B cell (primary cell): ENCODE measurements at regions of chr7 and their contacts with region 1.

Region 1: DNA sequence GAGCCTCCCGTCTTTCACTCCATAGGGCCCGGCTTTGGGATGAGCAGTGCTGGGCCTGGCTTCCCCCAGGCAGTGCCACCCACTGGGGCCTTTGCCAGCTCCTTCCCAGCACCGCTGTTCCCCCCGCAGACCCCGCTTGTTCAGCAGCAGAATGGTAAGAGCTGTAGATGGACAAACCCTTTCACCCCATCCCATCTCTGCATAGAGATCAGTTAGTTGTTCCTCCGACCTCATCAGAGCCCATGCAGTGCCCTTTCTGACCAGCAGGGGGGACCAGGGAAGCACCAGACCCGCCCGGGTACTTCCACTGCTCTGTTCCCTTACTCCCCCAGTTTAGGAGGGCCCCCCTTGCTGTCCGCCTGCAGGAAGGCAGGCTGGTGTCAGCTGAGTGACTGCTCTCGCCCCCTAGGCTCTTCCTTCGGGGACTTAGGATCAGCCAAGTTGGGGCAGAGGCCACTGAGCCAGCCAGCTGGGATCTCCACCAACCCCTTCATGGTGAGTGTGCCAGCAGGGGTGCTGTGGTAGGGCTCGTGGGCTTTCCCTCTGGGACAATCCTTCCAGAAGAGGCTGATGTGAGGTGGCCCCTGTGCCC is 9.8 kb downstream of the SAP25 start:
- DNase-seq: peak; percentile 85
- ATAC-seq: peak; percentile 77
- H3K4me3 ChIP-seq: no peak overlapping the region
- H3K4me3 Mint-ChIP-seq: no peak overlapping the region
- H3K27ac ChIP-seq: no peak overlapping the region
- H3K27ac Mint-ChIP-seq: no peak overlapping the region
- H3K4me1 ChIP-seq: peaks cover 20 to 29% of the 10 kb centered on the region in 2 donors
- H3K4me1 Mint-ChIP-seq: peaks cover 26% of the 10 kb centered on the region
- H3K27me3 ChIP-seq: no peaks in the 10 kb centered on the region
- H3K27me3 Mint-ChIP-seq: no peaks in the 10 kb centered on the region
- CTCF ChIP-seq: peak; percentile 94

Region 2: GRCh38 chr7:100478966-100479665 is 84.8 kb before region 1 on chr7 and contains the start of gene TSC22D4:
- CTCF ChIA-PET with region 1: interaction called, 18 read pairs
- POLR2A ChIA-PET with region 1: interaction called, 3 read pairs
- intact Hi-C with region 1: loop called (anchors 1 kb)
- DNase-seq: peak; percentile 92
- ATAC-seq: peak; percentile 70
- H3K4me3 ChIP-seq: peak within 1 kb of the TSS; percentile 90 to 99 (median 96)
- H3K4me3 Mint-ChIP-seq: peak within 1 kb of the TSS; percentile 97
- H3K27ac ChIP-seq: peak within 1 kb of the TSS; percentile 72 to 89
- H3K27ac Mint-ChIP-seq: peak within 1 kb of the TSS; percentile 91
- H3K4me1 ChIP-seq: peaks cover 34 to 51% of the 10 kb centered on the region in 2 donors
- H3K4me1 Mint-ChIP-seq: peaks cover 37% of the 10 kb centered on the region
- H3K27me3 ChIP-seq: no peaks in the 10 kb centered on the region
- H3K27me3 Mint-ChIP-seq: no peaks in the 10 kb centered on the region
- CTCF ChIP-seq: no peak
- total RNA-seq, gene TSC22D4: 92.8 and 95.0 TPM in 2 replicates

Region 3: DNA sequence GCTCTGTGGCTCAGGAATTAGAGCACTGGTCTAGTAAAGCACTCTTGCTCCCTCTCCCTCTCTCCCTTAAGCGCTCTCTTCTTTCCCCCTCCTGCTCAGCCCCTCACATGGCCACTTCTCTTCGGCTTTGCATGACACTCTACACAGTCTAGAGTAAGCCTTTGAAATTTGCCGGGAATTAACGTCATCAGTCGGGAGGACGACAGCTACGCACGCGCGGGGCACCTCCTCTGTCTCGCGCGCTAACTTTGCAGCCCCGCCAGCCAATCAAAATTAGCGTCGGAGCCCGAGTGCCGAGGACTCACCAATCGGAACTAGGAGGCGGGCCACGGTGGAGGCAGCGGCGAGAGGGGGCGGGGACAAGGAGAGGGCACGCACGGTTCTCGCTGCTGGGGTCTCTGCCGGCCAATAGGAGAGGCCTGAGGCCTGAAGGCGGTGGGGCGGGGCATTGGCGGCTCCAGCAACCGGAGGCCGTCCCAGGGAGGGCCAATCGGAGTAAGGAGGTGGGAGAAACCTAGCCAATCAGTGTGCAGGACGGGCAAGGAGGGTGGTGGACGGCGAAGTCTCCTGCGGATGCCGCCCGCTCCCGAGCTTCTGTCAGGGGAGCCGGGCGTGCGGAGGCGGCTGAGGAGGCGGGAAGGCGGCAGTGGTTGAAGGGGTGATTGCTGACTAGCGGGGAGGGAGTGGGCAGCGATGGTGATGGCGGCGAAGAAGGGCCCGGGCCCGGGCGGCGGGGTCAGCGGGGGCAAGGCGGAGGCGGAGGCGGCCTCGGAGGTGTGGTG is 25.1 kb before region 1 on chr7 and contains the start of gene AGFG2:
- CTCF ChIA-PET with region 1: interaction called, 21 read pairs
- POLR2A ChIA-PET with region 1: no interaction called
- intact Hi-C with region 1: loop called (anchors 2 kb)
- DNase-seq: peak; percentile 100
- ATAC-seq: peak; percentile 97
- H3K4me3 ChIP-seq: peak within 1 kb of the TSS; percentile 62 to 84 (median 72)
- H3K4me3 Mint-ChIP-seq: peak within 1 kb of the TSS; percentile 91
- H3K27ac ChIP-seq: peak within 1 kb of the TSS in 1 of 2 donors; percentile 42
- H3K27ac Mint-ChIP-seq: peak within 1 kb of the TSS; percentile 76
- H3K4me1 ChIP-seq: peaks cover 14 to 23% of the 10 kb centered on the region in 2 donors
- H3K4me1 Mint-ChIP-seq: peaks cover 36% of the 10 kb centered on the region
- H3K27me3 ChIP-seq: no peaks in the 10 kb centered on the region
- H3K27me3 Mint-ChIP-seq: no peaks in the 10 kb centered on the region
- CTCF ChIP-seq: no peak
- total RNA-seq, gene AGFG2: 11.0 and 11.6 TPM in 2 replicates

Region 4: DNA sequence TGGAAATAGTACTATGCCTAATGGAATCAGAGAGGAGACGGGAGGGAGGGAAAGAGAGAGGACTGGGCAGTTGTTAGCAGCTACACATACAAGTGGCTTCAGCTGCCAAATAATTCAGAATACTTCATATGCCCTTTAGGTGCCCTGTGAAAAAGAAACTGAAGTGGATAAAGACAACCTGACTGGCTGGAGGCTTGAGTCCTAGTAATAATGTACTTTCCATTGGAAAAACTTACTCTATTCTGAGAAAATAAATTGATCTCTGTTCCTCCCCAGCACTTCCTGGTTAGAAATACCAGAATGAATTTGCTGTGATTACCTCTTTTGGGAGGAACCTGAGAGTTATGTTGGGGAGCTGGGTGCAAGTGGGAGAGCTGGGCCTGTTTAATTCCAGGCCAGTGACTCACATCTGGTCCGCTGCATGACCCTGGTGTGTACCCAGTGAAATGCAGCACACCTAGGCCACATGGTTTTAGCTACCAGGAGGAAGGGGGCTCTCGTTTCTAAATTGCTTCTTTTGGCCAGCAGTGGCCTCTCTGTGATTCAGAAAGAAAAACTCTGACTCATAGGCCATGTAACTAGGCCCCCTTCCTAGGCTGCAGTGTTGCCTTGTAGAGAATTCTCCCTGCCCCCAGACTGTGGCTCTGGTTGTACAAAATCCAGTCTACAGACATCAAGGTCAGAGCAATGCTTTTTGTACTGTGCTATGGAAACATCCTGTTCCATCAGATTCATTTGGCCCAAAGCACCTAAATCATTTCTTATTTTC is 18.4 kb before region 1 on chr7:
- CTCF ChIA-PET with region 1: interaction called, 67 read pairs
- POLR2A ChIA-PET with region 1: no interaction called
- intact Hi-C with region 1: no loop called
- DNase-seq: no peak
- ATAC-seq: peak; percentile 31
- H3K4me3 ChIP-seq: no peak overlapping the region
- H3K4me3 Mint-ChIP-seq: peak overlapping the region; percentile 35
- H3K27ac ChIP-seq: peak overlapping the region in 1 of 2 donors; percentile 12
- H3K27ac Mint-ChIP-seq: peak overlapping the region; percentile 43
- H3K4me1 ChIP-seq: peaks cover 36 to 57% of the 10 kb centered on the region in 2 donors
- H3K4me1 Mint-ChIP-seq: peaks cover 72% of the 10 kb centered on the region
- H3K27me3 ChIP-seq: no peaks in the 10 kb centered on the region
- H3K27me3 Mint-ChIP-seq: no peaks in the 10 kb centered on the region
- CTCF ChIP-seq: no peak

Region 5: GRCh38 chr7:100691676-100692577 is 128.0 kb after region 1 on chr7:
- CTCF ChIA-PET with region 1: interaction called, 49 read pairs
- POLR2A ChIA-PET with region 1: no interaction called
- intact Hi-C with region 1: loop called (anchors 1 kb)
- DNase-seq: peak; percentile 86
- ATAC-seq: peak; percentile 60
- H3K4me3 ChIP-seq: peak overlapping the region in 2 of 5 experiments; percentile 58 to 79
- H3K4me3 Mint-ChIP-seq: peak overlapping the region; percentile 89
- H3K27ac ChIP-seq: no peak overlapping the region
- H3K27ac Mint-ChIP-seq: peak overlapping the region; percentile 92
- H3K4me1 ChIP-seq: peaks cover 52 to 55% of the 10 kb centered on the region in 2 donors
- H3K4me1 Mint-ChIP-seq: peaks cover 51% of the 10 kb centered on the region
- H3K27me3 ChIP-seq: no peaks in the 10 kb centered on the region
- H3K27me3 Mint-ChIP-seq: no peaks in the 10 kb centered on the region
- CTCF ChIP-seq: peak; percentile 88

Region 6: DNA sequence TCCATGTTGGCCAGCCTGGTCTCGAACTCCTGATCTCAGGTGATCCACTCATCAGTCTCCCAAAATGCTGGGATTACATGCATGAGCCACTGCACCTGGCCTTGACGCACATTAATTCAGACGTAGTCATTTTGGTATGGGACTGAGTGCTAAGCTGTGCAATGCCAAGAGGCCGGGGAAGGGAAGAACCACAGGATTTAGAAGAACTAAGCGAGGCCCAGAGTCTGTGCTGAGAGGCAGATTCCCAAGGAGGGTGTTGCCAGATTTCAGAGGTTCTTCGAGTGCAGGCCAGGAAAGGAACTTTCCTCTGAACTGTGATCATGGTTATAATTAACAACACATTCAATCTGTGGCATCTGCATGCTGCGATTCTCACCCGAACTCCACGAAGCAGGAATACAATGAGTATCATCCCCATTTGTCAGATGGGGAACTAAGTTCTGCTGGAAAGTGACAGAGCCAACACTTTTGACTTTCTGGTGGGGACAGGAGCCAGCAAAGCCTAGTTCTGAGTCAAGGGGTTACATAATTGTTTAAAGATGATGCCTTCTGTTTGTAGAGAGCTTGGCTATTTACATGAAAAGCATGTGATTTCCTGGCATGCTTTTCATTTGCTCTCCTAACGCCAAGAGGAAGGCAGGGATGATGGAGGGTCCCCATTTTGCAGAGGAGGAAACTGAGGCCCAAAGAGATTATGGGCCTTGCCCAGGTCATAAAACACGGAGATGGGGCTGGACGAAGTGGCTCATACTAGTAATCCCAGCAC is 163.3 kb after region 1 on chr7:
- CTCF ChIA-PET with region 1: interaction called, 18 read pairs
- POLR2A ChIA-PET with region 1: interaction called, 4 read pairs
- intact Hi-C with region 1: loop called (anchors 1 kb)
- DNase-seq: no peak
- ATAC-seq: no peak
- H3K4me3 ChIP-seq: no peak overlapping the region
- H3K4me3 Mint-ChIP-seq: no peak overlapping the region
- H3K27ac ChIP-seq: no peak overlapping the region
- H3K27ac Mint-ChIP-seq: no peak overlapping the region
- H3K4me1 ChIP-seq: peaks cover 0 to 7% of the 10 kb centered on the region in 2 donors
- H3K4me1 Mint-ChIP-seq: peaks cover 3% of the 10 kb centered on the region
- H3K27me3 ChIP-seq: peaks cover 0 to 39% (median 8%) of the 10 kb centered on the region in 4 experiments
- H3K27me3 Mint-ChIP-seq: peaks cover 36% of the 10 kb centered on the region
- CTCF ChIP-seq: no peak